MCF 10A (cell line): ENCODE measurements at regions of chr2 and their contacts with region 1.

Region 1: DNA sequence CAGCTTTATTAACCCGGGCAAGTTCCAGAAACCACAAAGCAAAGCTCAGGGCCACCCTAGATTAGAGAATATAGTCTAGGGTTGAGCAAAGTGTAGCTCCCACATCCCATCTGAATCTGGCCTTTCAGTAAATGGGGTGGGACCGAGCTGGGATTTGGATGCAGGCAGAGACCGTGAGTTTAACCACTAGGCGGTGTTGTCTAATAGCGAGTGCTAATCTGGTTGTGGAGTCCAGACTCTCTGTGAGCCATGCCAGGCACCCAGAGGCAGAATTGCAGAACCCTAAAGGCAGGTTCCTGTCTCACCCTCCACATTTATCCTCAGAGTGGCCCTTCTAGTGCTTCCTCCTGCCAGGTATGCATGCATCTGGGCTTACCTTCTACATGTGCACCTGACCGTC is 435.9 kb downstream of the TSN start:
- DNase-seq: peak; percentile 78
- H3K4me3 Mint-ChIP-seq: no peak overlapping the region
- H3K27ac Mint-ChIP-seq: no peak overlapping the region
- H3K4me1 Mint-ChIP-seq: peaks cover 8% of the 10 kb centered on the region
- H3K27me3 Mint-ChIP-seq: no peaks in the 10 kb centered on the region
- CTCF ChIP-seq: peak; percentile 34

Region 2: GRCh38 chr2:121810959-121811853 is 380.1 kb before region 1 on chr2:
- CTCF ChIA-PET with region 1: interaction called, 3 read pairs
- POLR2A ChIA-PET with region 1: no interaction called
- intact Hi-C with region 1: loop called (anchors 1 kb)
- DNase-seq: peak; percentile 74
- H3K4me3 Mint-ChIP-seq: no peak overlapping the region
- H3K27ac Mint-ChIP-seq: no peak overlapping the region
- H3K4me1 Mint-ChIP-seq: peaks cover 5% of the 10 kb centered on the region
- H3K27me3 Mint-ChIP-seq: no peaks in the 10 kb centered on the region
- CTCF ChIP-seq: peak; percentile 66

Region 3: DNA sequence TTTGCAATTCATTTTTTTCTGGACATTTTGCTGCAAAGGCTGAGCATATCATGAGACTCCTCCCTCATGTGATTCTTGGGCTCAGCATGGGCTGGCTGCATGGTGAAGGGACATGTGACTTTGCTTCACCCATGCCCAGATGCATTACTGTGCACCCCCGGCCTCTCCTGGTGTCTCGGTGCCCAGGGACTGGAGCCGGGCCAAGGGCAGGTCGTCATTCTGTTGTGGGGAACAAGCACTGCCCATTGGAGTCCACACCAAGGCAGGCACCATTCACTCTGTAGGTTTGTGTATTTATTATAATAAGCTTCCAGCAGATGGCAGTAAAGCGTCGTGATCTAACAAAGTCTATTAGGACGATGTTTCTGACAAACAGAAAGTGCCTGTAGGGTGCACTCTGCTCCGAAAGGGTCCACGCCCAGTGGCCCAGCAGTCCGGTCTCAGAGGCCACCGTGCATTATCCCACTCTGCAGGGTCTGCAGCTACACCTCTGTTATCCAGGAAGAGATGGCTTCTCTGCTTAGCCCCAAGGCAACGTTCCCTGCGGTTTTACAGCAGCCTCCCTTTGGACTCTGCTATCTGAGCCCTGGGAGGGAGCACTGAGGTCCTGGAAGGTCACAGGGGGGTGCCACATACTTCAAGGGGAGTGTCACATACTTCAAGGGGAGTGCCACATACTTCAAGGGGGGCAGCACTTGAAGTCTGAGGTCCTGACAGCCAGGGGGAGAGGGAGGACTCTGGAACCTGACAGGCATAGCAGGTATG is 216.3 kb before region 1 on chr2:
- CTCF ChIA-PET with region 1: interaction called, 3 read pairs
- POLR2A ChIA-PET with region 1: no interaction called
- intact Hi-C with region 1: loop called (anchors 1 kb)
- DNase-seq: peak; percentile 91
- H3K4me3 Mint-ChIP-seq: peak overlapping the region; percentile 61
- H3K27ac Mint-ChIP-seq: no peak overlapping the region
- H3K4me1 Mint-ChIP-seq: peaks cover 7% of the 10 kb centered on the region
- H3K27me3 Mint-ChIP-seq: no peaks in the 10 kb centered on the region
- CTCF ChIP-seq: peak; percentile 61

Region 4: DNA sequence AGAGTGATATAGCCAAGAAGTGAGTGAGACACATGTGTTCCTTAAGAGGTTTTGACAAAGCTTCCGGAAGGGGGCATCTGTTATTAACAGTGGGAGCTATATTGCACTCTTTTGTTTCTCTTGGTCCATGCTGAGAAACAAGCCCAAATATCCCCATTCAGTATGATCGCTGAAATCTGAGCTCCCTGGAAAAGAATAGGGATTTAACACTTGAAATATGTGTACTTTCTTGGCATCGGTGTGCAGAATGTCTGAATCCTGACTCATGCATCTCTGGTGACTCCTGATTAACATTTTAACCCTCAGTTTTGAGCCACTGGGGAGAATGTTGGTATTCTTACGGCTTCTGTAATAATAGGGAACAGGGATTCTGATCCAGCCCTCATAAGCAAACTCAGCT is 12.2 kb after region 1 on chr2:
- CTCF ChIA-PET with region 1: interaction called, 14 read pairs
- POLR2A ChIA-PET with region 1: interaction called, 3 read pairs
- intact Hi-C with region 1: no loop called
- DNase-seq: peak; percentile 92
- H3K4me3 Mint-ChIP-seq: no peak overlapping the region
- H3K27ac Mint-ChIP-seq: peak overlapping the region; percentile 90
- H3K4me1 Mint-ChIP-seq: peaks cover 17% of the 10 kb centered on the region
- H3K27me3 Mint-ChIP-seq: no peaks in the 10 kb centered on the region
- CTCF ChIP-seq: peak; percentile 27

Region 5: DNA sequence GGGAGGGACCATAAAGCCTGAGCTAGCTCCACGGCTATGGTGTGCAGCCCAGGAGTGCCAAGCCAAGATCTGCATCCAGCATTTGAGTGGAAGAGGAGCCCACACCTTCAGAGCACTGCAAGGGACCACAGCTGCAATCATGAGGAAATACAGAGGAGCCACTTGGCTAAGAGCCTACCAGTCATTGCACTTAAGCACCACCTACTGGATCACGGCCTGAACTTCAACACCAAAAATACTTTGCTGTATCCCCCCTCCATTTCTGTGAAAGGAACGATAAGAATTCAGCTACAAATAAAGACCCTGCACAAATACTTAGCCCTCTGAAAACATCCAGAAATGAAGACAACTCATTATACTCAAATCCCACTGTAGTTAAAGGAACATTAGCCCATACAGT is 109.4 kb after region 1 on chr2:
- CTCF ChIA-PET with region 1: no interaction called
- POLR2A ChIA-PET with region 1: no interaction called
- intact Hi-C with region 1: loop called (anchors 1 kb)
- DNase-seq: peak; percentile 56
- H3K4me3 Mint-ChIP-seq: no peak overlapping the region
- H3K27ac Mint-ChIP-seq: no peak overlapping the region
- H3K4me1 Mint-ChIP-seq: no peaks in the 10 kb centered on the region
- H3K27me3 Mint-ChIP-seq: no peaks in the 10 kb centered on the region
- CTCF ChIP-seq: peak; percentile 23

Region 6: DNA sequence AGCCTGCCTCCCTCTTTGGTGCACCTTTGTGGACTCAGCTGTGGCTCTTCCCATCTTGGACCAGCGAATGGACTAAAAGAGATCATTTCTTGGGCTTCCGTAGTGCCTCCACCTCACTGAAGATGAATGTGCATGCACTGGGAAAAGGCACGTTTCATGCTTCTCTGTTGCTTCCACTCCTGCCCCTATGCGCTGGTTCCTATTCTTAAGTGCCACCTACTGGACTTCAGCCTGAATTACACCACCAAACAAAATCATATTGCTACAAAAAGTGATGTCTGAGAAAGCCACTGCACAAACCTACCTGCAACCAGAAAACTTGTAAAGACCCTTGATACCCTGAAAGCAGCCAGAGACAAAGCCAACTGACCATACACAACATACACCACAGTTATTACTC is 259.7 kb after region 1 on chr2:
- CTCF ChIA-PET with region 1: interaction called, 9 read pairs
- POLR2A ChIA-PET with region 1: no interaction called
- intact Hi-C with region 1: loop called (anchors 1 kb)
- DNase-seq: peak; percentile 66
- H3K4me3 Mint-ChIP-seq: no peak overlapping the region
- H3K27ac Mint-ChIP-seq: no peak overlapping the region
- H3K4me1 Mint-ChIP-seq: no peaks in the 10 kb centered on the region
- H3K27me3 Mint-ChIP-seq: no peaks in the 10 kb centered on the region
- CTCF ChIP-seq: peak; percentile 66

Region 7: GRCh38 chr2:123993728-123994323 is 1802.5 kb after region 1 on chr2:
- CTCF ChIA-PET with region 1: no interaction called
- POLR2A ChIA-PET with region 1: no interaction called
- intact Hi-C with region 1: loop called (anchors 5 kb)
- DNase-seq: peak; percentile 67
- H3K4me3 Mint-ChIP-seq: peak overlapping the region; percentile 10
- H3K27ac Mint-ChIP-seq: no peak overlapping the region
- H3K4me1 Mint-ChIP-seq: peaks cover 20% of the 10 kb centered on the region
- H3K27me3 Mint-ChIP-seq: no peaks in the 10 kb centered on the region
- CTCF ChIP-seq: peak; percentile 57